OCI-LY7 (cell line): ENCODE measurements at regions of chr6 and their contacts with region 1.

Region 1: GRCh38 chr6:28981833-28982475 is 23.2 kb downstream of the ZNF311 start:
- DNase-seq: peak; percentile 84
- H3K4me3 ChIP-seq: peak overlapping the region; percentile 98
- H3K27ac ChIP-seq: peak overlapping the region; percentile 37
- H3K4me1 ChIP-seq: peaks cover 22% of the 10 kb centered on the region
- CTCF ChIP-seq: 0 out of 2 replicates have a peak, but pooled peaks have one; percentile 26

Region 2: GRCh38 chr6:28657769-28658465 is 324.0 kb before region 1 on chr6:
- CTCF ChIA-PET with region 1: no interaction called
- POLR2A ChIA-PET with region 1: no interaction called
- intact Hi-C with region 1: loop called (anchors 5 kb)
- DNase-seq: peak; percentile 78
- H3K4me3 ChIP-seq: peak overlapping the region; percentile 82
- H3K27ac ChIP-seq: peak overlapping the region; percentile 16
- H3K4me1 ChIP-seq: peaks cover 18% of the 10 kb centered on the region
- CTCF ChIP-seq: no peak

Region 3: DNA sequence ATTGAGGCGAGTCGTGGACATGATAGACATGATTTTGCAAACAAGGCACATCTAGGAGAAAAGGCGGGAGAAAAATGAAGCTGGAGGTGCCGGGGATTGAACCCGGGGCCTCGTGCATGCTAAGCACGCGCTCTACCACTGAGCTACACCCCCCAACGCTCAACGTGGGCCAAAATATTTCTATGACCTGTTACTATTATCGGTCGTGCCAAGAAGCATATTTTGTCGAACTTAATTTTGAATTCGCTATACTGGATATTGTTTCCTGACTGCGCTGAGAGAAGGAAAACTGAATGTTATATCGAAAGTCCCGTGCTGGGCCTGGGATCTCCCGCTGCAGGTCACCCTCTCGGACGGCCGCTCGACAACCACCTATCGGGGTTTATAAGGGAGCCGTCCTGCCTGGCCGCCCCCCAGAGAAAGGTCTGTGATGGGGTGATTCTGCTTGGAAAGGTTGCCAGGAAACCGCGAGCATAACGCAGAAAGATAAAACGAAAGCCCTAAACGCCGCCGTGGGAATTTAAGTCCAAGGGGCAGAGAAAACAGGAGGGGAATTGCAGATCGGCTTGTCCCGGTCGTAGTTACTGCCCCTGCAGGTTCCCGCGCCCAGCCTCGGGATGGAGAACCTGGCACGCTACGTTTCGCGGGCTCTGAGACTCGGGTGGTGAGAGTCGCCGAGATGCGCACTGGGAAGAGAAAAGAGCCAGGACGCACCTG is 118.2 kb before region 1 on chr6:
- CTCF ChIA-PET with region 1: no interaction called
- POLR2A ChIA-PET with region 1: no interaction called
- intact Hi-C with region 1: loop called (anchors 1 kb)
- DNase-seq: peak; percentile 79
- H3K4me3 ChIP-seq: peak overlapping the region; percentile 80
- H3K27ac ChIP-seq: peak overlapping the region; percentile 37
- H3K4me1 ChIP-seq: peaks cover 37% of the 10 kb centered on the region
- CTCF ChIP-seq: no peak

Region 4: GRCh38 chr6:28953039-28953584 is 28.8 kb before region 1 on chr6:
- CTCF ChIA-PET with region 1: no interaction called
- POLR2A ChIA-PET with region 1: interaction called, 5 read pairs
- intact Hi-C with region 1: loop called (anchors 1 kb)
- DNase-seq: peak; percentile 74
- H3K4me3 ChIP-seq: peak overlapping the region; percentile 65
- H3K27ac ChIP-seq: no peak overlapping the region
- H3K4me1 ChIP-seq: peaks cover 18% of the 10 kb centered on the region
- CTCF ChIP-seq: no peak